Ascending aorta (tissue), 2 donors: ENCODE measurements at regions of chr4 and their contacts with region 1.

Region 1: GRCh38 chr4:176195184-176195978 is at the start of gene SPATA4:
- DNase-seq: peak; percentile 74 to 96
- H3K4me3 ChIP-seq: peak within 1 kb of the TSS; percentile 54 to 69
- H3K27ac ChIP-seq: peak within 1 kb of the TSS; percentile 63 to 80
- H3K4me1 ChIP-seq: peaks cover 0 to 4% of the 10 kb centered on the region in 2 donors
- H3K27me3 ChIP-seq: no peaks in the 10 kb centered on the region
- CTCF ChIP-seq: no peak
- total RNA-seq, gene SPATA4: not detected

Region 2: DNA sequence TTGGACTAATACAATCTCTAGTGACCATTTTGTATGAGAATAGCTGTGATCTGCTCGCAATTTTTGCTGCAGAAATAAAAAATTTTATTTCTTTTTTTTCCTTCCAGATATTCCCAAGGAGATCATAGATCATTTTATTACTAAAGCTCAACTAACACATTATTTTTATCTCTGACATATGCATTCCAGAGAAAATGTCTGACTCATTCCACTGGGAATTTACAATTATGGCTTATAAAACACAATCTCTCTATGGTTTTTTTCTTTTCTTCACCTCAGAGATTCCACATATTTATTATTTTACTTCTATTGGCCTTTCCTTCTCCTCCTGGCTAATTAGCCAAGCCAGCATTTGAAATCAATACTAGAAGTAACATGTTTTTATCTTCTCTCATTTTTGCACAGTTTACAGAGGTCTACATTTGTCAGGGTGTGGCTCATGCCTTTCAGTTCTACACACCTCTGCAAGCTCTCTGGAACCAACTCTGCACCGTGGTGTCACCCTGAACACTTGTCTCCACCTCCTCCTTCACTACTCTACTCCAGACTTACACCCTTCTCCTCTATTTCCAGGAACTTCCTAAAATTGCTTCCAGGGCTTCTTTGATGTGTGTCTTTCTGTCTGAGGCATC is 323.5 kb before region 1 on chr4:
- intact Hi-C with region 1: no loop called
- DNase-seq: no peak
- H3K4me3 ChIP-seq: no peak overlapping the region
- H3K27ac ChIP-seq: no peak overlapping the region
- H3K4me1 ChIP-seq: no peaks in the 10 kb centered on the region
- H3K27me3 ChIP-seq: no peaks in the 10 kb centered on the region
- CTCF ChIP-seq: no peak

Region 3: DNA sequence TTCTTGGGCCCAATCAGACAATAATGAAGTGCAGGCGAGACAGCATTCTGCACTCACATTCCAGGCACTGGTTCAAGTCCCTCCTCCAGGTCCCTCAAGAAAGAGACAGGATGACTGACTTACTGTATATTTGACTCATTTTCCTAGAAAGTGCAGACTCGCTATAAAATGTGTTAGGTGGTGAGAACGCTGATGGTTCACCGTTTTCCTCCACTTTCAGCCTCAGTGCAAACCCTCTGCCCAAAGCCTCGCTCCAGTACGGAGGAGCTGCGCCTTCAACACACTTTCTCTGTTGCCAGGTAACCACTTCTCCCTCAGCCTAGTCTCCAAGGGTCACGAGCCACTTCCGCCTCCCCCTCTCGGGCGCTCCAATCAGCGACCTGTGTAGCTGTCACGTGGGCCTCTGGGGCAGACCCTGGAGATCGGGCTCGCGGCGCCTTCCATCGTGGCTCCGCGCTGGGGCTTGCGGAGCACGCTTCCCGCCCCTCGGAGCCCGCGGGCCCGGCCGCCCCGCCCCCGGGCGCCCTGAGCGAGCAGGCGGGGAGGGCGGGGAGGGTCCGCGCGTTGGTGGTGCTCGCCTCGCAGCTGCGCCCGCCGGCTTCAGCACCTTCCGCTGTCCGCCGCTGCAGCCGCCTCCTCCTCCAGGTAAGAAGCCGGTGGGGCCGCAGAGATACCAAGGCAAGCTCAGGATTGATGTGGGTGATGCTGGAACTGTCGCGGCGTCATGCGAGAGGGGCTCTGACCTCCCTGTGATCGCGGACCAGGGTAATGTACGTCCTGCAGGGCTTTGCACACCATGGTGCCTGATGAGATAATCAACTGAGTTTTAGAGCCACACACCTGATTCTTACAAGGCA is 129.7 kb before region 1 on chr4 and contains the start of gene WDR17:
- intact Hi-C with region 1: loop called (anchors 5 kb)
- DNase-seq: peak; percentile 69 to 94
- H3K4me3 ChIP-seq: peak within 1 kb of the TSS; percentile 63 to 70
- H3K27ac ChIP-seq: no peak within 1 kb of the TSS
- H3K4me1 ChIP-seq: no peaks in the 10 kb centered on the region
- H3K27me3 ChIP-seq: no peaks in the 10 kb centered on the region
- CTCF ChIP-seq: no peak
- total RNA-seq, gene WDR17: 3.4 TPM

Region 4: GRCh38 chr4:176185067-176185466 is 10.3 kb before region 1 on chr4:
- intact Hi-C with region 1: loop called (anchors 1 kb)
- DNase-seq: no peak
- H3K4me3 ChIP-seq: no peak overlapping the region
- H3K27ac ChIP-seq: peak overlapping the region in 1 of 2 donors; percentile 79
- H3K4me1 ChIP-seq: peaks cover 0 to 8% of the 10 kb centered on the region in 2 donors
- H3K27me3 ChIP-seq: no peaks in the 10 kb centered on the region
- CTCF ChIP-seq: no peak

Region 5: GRCh38 chr4:176238157-176238610 is 42.8 kb after region 1 on chr4:
- intact Hi-C with region 1: loop called (anchors 2 kb)
- DNase-seq: no peak
- H3K4me3 ChIP-seq: no peak overlapping the region
- H3K27ac ChIP-seq: peak overlapping the region; percentile 78 to 85
- H3K4me1 ChIP-seq: no peaks in the 10 kb centered on the region
- H3K27me3 ChIP-seq: no peaks in the 10 kb centered on the region
- CTCF ChIP-seq: no peak

Region 6: DNA sequence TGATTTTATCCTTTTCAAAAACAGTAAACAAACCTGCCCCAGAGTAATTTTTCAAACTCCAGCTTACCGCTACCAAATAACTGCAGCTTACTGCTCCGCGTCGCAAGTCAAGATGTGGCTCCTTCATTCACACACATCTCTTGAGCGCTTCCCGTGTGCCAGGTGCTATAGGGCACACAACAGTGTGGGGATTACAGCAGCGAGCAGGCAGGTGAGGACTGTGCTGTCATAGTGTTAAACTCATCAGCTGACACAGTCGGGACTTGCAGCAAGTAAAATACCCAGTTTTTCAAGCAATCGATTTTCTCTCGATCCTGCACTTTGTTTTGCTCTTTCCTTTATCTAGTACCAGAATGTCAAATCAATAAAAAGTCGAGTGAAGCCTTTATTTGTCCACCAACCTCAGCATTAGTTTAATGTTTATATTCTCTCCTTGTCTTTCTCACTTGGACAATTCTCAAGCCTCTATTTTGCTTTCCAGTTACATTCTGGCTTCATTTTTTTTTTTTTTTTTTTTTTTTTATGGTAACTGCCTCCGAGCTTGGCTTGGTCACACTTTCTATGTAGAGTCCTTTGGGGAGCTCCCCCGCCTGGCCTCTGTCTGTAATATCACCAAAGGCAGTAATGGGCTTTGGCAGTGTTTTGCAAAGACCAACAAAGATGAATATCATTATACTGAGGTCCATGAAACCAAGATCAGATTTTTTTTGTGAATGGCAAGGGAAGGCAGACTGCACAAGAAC is 82.0 kb after region 1 on chr4:
- intact Hi-C with region 1: loop called (anchors 5 kb)
- DNase-seq: peak in 1 of 2 donors; percentile 68
- H3K4me3 ChIP-seq: peak overlapping the region in 1 of 2 donors; percentile 16
- H3K27ac ChIP-seq: no peak overlapping the region
- H3K4me1 ChIP-seq: no peaks in the 10 kb centered on the region
- H3K27me3 ChIP-seq: no peaks in the 10 kb centered on the region
- CTCF ChIP-seq: peak in 2 of 3 experiments; percentile 42 to 53

Region 7: GRCh38 chr4:176319704-176320339 is 124.4 kb after region 1 on chr4 and contains the start of gene SPCS3:
- intact Hi-C with region 1: loop called (anchors 1 kb)
- DNase-seq: peak; percentile 72 to 98
- H3K4me3 ChIP-seq: peak within 1 kb of the TSS; percentile 76 to 97
- H3K27ac ChIP-seq: peak within 1 kb of the TSS; percentile 94 to 97
- H3K4me1 ChIP-seq: peaks cover 3 to 22% of the 10 kb centered on the region in 2 donors
- H3K27me3 ChIP-seq: no peaks in the 10 kb centered on the region
- CTCF ChIP-seq: no peak
- total RNA-seq, gene SPCS3: 57.4 TPM

Region 8: GRCh38 chr4:176340871-176341685 is 145.7 kb after region 1 on chr4:
- intact Hi-C with region 1: loop called (anchors 5 kb)
- DNase-seq: no peak
- H3K4me3 ChIP-seq: peak overlapping the region in 1 of 2 donors; percentile 25
- H3K27ac ChIP-seq: no peak overlapping the region
- H3K4me1 ChIP-seq: peaks cover 0 to 2% of the 10 kb centered on the region in 2 donors
- H3K27me3 ChIP-seq: no peaks in the 10 kb centered on the region
- CTCF ChIP-seq: peak; percentile 9 to 57 (median 52)